WTC11 (cell line): ENCODE measurements at regions of chr12 and their contacts with region 1.

Region 1: GRCh38 chr12:2890388-2891239 is at the start of gene TULP3:
- DNase-seq: peak; percentile 98
- ATAC-seq: peak; percentile 93
- H3K4me3 Mint-ChIP-seq: peak within 1 kb of the TSS; percentile 78
- H3K27ac Mint-ChIP-seq: peak within 1 kb of the TSS; percentile 93
- H3K4me1 Mint-ChIP-seq: peaks cover 18% of the 10 kb centered on the region
- H3K27me3 Mint-ChIP-seq: no peaks in the 10 kb centered on the region; the same call in 1 of the 2 replicates
- CTCF ChIP-seq: no peak
- total RNA-seq, gene TULP3: 17.4 to 18.8 TPM (median 18.0 TPM) in 3 replicates

Region 2: GRCh38 chr12:2877047-2877952 is 13.3 kb before region 1 on chr12 and contains the starts of genes FOXM1 and RHNO1:
- CTCF ChIA-PET with region 1: interaction called, 36 read pairs
- POLR2A ChIA-PET with region 1: interaction called, 24 read pairs
- DNase-seq: peak; percentile 94
- ATAC-seq: peak; percentile 77
- H3K4me3 Mint-ChIP-seq: peak within 1 kb of the TSS; percentile 99
- H3K27ac Mint-ChIP-seq: peak within 1 kb of the TSS; percentile 94
- H3K4me1 Mint-ChIP-seq: peaks cover 25% of the 10 kb centered on the region
- H3K27me3 Mint-ChIP-seq: no peaks in the 10 kb centered on the region
- CTCF ChIP-seq: no peak
- total RNA-seq, gene FOXM1: 99.6 to 118 TPM (median 100 TPM) in 3 replicates
- total RNA-seq, gene RHNO1: 48.0 to 50.3 TPM (median 49.5 TPM) in 3 replicates

Region 3: DNA sequence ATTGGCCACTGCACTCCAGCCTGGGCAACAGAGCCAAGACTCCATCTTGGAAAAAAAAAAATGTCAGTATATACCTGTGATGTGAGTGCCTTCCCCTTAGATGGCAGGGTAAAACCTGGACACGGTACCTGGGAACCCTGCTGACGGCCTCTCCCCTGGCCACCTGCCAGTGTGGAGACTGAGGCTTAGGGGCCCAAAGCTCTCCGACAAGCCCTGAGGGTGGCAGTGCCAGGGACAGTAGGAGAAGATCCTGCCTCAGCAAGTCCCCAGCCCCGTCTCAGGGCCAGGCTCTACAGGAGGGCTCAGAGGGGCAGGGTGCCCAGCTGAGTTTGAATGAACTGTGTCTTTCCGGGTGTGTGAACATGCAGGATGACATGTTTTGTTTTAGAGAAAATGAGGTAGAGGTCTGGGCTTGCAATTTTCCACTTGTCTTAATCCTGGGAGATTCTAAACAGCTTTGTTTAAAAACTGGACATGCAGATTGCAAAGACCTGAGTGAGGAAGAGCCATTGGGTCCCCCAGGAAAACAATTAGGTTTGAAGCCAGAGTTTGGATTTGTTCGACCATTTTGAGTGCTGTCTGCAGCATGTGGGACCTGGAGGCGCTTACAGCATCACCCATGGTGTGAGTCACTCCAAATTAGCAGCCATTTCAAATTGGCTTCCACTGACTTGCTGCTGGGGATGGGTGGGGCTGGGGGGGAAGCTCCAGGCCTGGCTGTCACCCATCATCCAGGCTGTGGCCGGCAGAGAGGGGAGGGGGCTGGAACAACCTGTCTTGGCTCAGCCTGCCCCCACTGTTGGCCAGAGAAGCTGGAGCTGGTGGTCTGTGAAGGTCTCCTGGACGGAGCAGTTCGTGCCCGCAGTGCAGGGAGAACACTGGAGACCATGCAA is 197.4 kb after region 1 on chr12:
- CTCF ChIA-PET with region 1: no interaction called
- POLR2A ChIA-PET with region 1: no interaction called
- DNase-seq: no peak
- ATAC-seq: no peak
- H3K4me3 Mint-ChIP-seq: no peak overlapping the region
- H3K27ac Mint-ChIP-seq: peak overlapping the region; percentile 16
- H3K4me1 Mint-ChIP-seq: peaks cover 31% of the 10 kb centered on the region
- H3K27me3 Mint-ChIP-seq: no peaks in the 10 kb centered on the region
- CTCF ChIP-seq: no peak